ENCODE measurements at regions of chr11 and their contacts with region 1.

Region 1: DNA sequence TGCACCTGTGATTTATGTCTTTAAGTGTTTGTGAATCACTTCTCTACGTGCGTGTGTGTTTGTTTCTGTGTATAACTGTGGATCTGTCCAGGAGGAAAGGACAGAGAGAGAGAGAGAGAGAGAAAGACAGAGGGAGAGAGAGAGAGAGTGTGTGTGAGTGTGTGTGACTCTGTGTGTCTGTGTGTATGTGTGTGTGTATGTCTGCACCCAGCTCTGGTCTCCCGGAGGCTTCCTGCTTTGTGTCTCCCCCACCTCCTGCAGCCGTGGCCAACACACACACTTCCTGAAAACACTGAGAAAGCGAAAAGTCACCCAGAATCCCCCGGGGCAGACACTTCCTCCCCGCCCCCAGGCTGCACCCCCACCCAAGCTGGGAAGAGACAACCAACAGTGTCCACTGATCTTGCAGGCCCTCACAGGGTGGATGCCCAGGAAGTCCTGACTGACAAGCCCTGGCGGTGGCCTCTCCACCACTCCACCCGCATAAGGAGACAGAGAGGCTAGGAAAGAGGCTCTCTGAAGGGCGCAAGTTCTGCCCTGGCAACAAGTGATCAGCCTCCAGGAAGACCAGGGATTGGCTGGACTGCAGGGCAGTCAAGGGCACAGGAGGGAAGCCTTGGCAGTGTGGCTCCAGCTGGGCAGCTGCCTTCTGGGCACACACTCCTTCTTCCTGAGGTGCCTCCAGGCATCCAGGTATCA is 30.0 kb downstream of the ARAP1 start:
- DNase-seq: peak; percentile 95
- H3K4me3 ChIP-seq: peak overlapping the region; percentile 29 to 70 (median 55)
- H3K27ac ChIP-seq: peak overlapping the region; percentile 83
- H3K4me1 ChIP-seq: peaks cover 25% of the 10 kb centered on the region
- H3K27me3 ChIP-seq: no peaks in the 10 kb centered on the region
- CTCF ChIP-seq: no peak
- POLR2A ChIP-seq: peak; percentile 88

Region 2: GRCh38 chr11:72683782-72684200 is 38.4 kb before region 1 on chr11:
- CTCF ChIA-PET with region 1: interaction called, 13 read pairs
- POLR2A ChIA-PET with region 1: no interaction called
- dilution Hi-C with region 1: no loop called
- intact Hi-C with region 1: no loop called
- DNase-seq: peak; percentile 54
- H3K4me3 ChIP-seq: no peak overlapping the region
- H3K27ac ChIP-seq: no peak overlapping the region
- H3K4me1 ChIP-seq: no peaks in the 10 kb centered on the region
- H3K27me3 ChIP-seq: peaks cover 0 to 2% of the 10 kb centered on the region in 2 experiments
- CTCF ChIP-seq: peak; percentile 97
- POLR2A ChIP-seq: no peak

Region 3: DNA sequence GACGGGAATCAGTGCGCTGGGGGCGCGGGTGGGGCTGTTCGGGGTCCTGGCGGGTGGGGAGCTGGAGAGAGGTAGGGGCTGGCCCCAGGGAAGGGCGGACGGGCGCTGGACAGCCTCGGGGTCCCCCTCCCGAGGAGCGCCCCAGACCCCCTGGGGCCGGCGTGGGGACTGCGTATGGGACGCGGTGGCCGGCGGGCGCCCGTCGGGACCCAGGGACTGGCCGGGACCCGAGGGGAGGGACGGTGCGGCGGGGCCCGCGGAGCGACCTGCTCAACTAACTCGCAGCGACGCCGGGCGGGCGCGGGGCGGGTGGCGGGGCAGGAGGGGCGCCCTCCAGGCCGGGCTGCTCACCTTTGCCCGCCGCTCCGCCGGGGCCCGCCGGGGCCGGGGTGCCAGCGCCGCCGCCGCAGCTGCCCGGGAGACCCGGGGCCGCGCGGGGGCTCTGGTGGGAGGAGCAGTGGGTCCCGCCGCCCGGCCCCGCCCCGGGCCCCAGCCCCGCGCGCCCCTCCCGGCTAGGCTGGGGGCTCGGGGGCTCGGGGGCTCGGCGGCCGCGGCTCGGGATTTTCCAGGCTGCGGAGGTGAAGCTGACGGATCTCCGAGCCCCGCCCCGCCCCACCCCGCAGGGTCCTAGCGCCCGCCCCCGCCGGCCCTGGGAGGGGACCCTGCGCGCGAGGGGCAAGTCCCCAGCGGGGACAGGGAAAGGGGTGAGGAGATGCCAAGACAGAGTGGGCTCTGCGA is 59.3 kb after region 1 on chr11:
- CTCF ChIA-PET with region 1: interaction called, 14 read pairs
- POLR2A ChIA-PET with region 1: no interaction called
- dilution Hi-C with region 1: no loop called
- intact Hi-C with region 1: no loop called
- DNase-seq: no peak
- H3K4me3 ChIP-seq: peak overlapping the region in 1 of 3 experiments; percentile 50
- H3K27ac ChIP-seq: no peak overlapping the region
- H3K4me1 ChIP-seq: peaks cover 3% of the 10 kb centered on the region
- H3K27me3 ChIP-seq: no peaks in the 10 kb centered on the region
- CTCF ChIP-seq: no peak
- POLR2A ChIP-seq: no peak

Region 4: GRCh38 chr11:72814286-72815109 is 92.3 kb after region 1 on chr11 and contains the start of gene ATG16L2:
- CTCF ChIA-PET with region 1: interaction called, 48 read pairs
- POLR2A ChIA-PET with region 1: interaction called, 4 read pairs
- dilution Hi-C with region 1: no loop called
- intact Hi-C with region 1: loop called (anchors 1 kb)
- DNase-seq: peak; percentile 91
- H3K4me3 ChIP-seq: peak within 1 kb of the TSS; percentile 17 to 88 (median 56)
- H3K27ac ChIP-seq: peak within 1 kb of the TSS; percentile 67
- H3K4me1 ChIP-seq: peaks cover 31% of the 10 kb centered on the region
- H3K27me3 ChIP-seq: no peaks in the 10 kb centered on the region
- CTCF ChIP-seq: no peak
- POLR2A ChIP-seq: peak; percentile 68
- total RNA-seq, gene ATG16L2: 24.7 and 26.5 TPM in 2 replicates

Region 5: GRCh38 chr11:72848846-72849466 is 126.8 kb after region 1 on chr11:
- CTCF ChIA-PET with region 1: interaction called, 11 read pairs
- POLR2A ChIA-PET with region 1: no interaction called
- dilution Hi-C with region 1: no loop called
- intact Hi-C with region 1: no loop called
- DNase-seq: peak; percentile 59
- H3K4me3 ChIP-seq: no peak overlapping the region
- H3K27ac ChIP-seq: no peak overlapping the region
- H3K4me1 ChIP-seq: no peaks in the 10 kb centered on the region
- H3K27me3 ChIP-seq: no peaks in the 10 kb centered on the region
- CTCF ChIP-seq: peak; percentile 58 to 62
- POLR2A ChIP-seq: no peak

Region 6: GRCh38 chr11:73184953-73185671 is 462.9 kb after region 1 on chr11:
- CTCF ChIA-PET with region 1: interaction called, 77 read pairs
- POLR2A ChIA-PET with region 1: no interaction called
- dilution Hi-C with region 1: no loop called
- intact Hi-C with region 1: no loop called
- DNase-seq: peak; percentile 75
- H3K4me3 ChIP-seq: peak overlapping the region in 1 of 3 experiments; percentile 24
- H3K27ac ChIP-seq: peak overlapping the region; percentile 53
- H3K4me1 ChIP-seq: peaks cover 23% of the 10 kb centered on the region
- H3K27me3 ChIP-seq: no peaks in the 10 kb centered on the region
- CTCF ChIP-seq: peak; percentile 93 to 97
- POLR2A ChIP-seq: no peak

Region 7: GRCh38 chr11:73288873-73289707 is 566.9 kb after region 1 on chr11:
- CTCF ChIA-PET with region 1: interaction called, 23 read pairs
- POLR2A ChIA-PET with region 1: no interaction called
- dilution Hi-C with region 1: no loop called
- intact Hi-C with region 1: loop called (anchors 2 kb)
- DNase-seq: peak; percentile 86
- H3K4me3 ChIP-seq: no peak overlapping the region
- H3K27ac ChIP-seq: peak overlapping the region; percentile 71
- H3K4me1 ChIP-seq: peaks cover 17% of the 10 kb centered on the region
- H3K27me3 ChIP-seq: no peaks in the 10 kb centered on the region
- CTCF ChIP-seq: peak; percentile 95
- POLR2A ChIP-seq: no peak